ENCODE measurements at regions of chr18 and their contacts with region 1.

Region 1: DNA sequence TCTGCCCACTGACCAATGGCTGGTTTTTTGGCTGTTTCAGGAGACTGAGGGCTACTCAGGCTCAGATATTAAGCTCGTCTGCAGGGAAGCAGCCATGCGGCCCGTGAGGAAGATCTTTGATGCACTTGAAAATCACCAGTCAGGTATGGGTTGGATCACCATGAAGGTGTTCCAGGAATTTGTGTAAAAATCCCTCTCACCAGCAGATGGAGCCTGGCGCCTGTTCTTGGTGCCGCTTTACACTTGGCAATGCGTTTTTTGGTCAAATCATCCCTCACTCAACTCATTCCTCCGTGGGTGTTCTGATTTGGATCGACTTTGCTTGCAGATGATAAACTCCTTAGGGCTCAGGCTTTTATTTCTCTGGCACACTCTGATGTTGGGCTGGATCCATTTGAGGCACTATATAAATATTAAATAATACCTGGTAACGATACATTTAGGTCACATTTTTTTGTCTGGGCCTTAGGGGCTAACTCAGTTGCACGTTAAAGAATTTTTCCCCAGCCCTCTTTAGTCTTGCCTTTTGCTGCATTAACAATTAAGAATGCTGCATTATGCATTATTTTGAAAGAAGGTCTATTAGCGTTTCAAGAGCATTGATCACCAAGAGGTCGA is 50.0 kb downstream of the HDHD2 start:
- DNase-seq: peak; percentile 28 to 86
- H3K4me3 ChIP-seq: no peak overlapping the region
- CTCF ChIP-seq: no peak
- POLR2A ChIP-seq: no peak

Region 2: GRCh38 chr18:47184419-47185050 is 84.2 kb after region 1 on chr18:
- intact Hi-C with region 1: loop called (anchors 10 kb)
- DNase-seq: peak in 1 of 2 donors; percentile 34
- H3K4me3 ChIP-seq: no peak overlapping the region
- CTCF ChIP-seq: no peak
- POLR2A ChIP-seq: no peak

Region 3: GRCh38 chr18:47748847-47749599 is 648.7 kb after region 1 on chr18:
- intact Hi-C with region 1: loop called (anchors 10 kb)
- DNase-seq: peak; percentile 31 to 94
- H3K4me3 ChIP-seq: no peak overlapping the region
- CTCF ChIP-seq: peak in 2 of 3 donors; percentile 82 to 93
- POLR2A ChIP-seq: no peak